ENCODE measurements at regions of chr4 and their contacts with region 1.

Region 1: GRCh38 chr4:57832083-57832482 is 721.9 kb upstream of the IGFBP7 start:
- DNase-seq: no peak
- H3K4me3 ChIP-seq: no peak overlapping the region
- H3K27ac ChIP-seq: no peak overlapping the region
- H3K4me1 ChIP-seq: no peaks in the 10 kb centered on the region
- H3K27me3 ChIP-seq: no peaks in the 10 kb centered on the region
- CTCF ChIP-seq: no peak
- EP300 ChIP-seq: no peak
- POLR2A ChIP-seq: no peak

Region 2: DNA sequence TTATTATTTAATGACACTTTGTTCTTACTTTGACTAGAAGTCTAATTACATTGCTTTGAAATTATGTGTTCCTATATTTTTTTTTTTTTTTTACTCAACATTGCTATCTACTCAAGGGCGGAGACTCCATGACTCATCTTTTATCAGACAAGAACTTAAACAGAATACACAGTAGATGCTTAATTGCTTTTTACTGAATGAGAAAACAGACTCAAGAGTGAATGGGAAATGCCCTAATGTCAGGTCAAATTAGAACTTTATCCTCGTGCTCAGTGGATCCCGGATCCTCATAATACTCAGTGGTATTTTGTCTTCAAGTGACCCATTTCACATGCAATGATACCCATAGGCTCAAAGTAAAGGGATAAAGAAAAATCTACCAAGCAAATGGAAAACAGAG is 232.6 kb after region 1 on chr4:
- intact Hi-C with region 1: loop called in 1 of 4 experiments (anchors 5 kb)
- DNase-seq: no peak
- H3K4me3 ChIP-seq: no peak overlapping the region
- H3K27ac ChIP-seq: no peak overlapping the region
- H3K4me1 ChIP-seq: no peaks in the 10 kb centered on the region
- H3K27me3 ChIP-seq: no peaks in the 10 kb centered on the region
- CTCF ChIP-seq: no peak
- EP300 ChIP-seq: no peak
- POLR2A ChIP-seq: no peak